Right ventricle myocardium inferior (tissue), 1 donor: ENCODE measurements at regions of chr5 and their contacts with region 1.

Region 1: DNA sequence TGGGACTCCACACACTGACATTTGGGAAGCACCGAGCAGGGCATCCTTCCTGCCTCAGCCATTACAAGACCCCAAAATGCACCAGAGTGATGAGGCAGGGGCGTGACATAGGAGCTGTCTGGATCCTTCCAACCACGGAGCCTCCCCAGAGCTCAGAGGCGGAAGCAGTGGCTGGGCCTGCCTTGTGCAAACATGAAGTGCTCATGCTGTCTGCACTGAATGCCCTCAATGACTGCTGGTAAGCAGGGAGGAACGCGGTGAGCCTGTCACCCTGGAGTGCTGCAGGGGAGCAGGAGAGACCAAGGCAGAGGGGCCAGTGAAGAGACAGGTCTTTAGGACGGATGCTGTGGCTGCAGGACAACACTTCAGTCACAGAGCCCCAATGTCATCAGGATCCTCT is 60.2 kb upstream of the HRH2 start:
- DNase-seq: no peak
- ATAC-seq: peak; percentile 43

Region 2: DNA sequence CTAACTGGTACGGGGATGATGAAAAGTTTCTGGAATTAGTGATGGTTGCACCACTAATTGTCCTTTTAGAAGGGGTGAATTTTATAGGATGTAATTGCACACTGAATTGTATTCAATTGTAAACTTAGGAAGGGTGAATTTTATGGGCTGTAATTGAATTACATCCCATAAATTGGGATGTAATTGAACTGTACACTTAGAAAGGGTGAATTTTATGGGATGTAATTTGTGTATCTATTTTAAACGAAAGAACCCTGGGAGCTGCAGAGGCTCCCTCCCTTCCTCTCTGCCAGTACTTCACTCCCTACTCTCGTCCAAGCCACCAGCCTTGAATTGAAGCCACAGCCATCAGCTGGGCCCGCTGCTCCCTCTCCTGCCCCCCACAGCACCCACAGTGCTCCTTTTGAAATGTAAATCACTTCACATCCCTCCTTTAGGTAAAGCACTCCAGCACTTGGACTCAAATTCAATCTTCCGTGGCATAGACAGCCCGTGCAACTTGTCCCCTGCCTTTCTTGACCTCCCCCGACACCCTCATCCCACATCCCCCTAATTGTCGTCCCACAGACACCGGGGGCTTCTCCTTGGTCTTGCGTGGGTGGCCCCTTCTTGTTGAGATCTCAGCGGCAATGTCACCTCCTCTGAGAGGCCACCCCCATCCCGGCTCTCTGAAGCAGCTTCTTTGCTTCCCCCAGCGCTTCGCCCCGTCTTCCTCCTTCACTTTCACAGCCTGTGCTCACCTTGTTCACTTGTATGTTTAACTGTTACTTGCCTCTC is 24.0 kb before region 1 on chr5:
- intact Hi-C with region 1: loop called (anchors 1 kb)
- DNase-seq: no peak
- ATAC-seq: peak; percentile 30

Region 3: GRCh38 chr5:175689147-175689991 is 91.7 kb after region 1 on chr5:
- intact Hi-C with region 1: loop called (anchors 5 kb)
- DNase-seq: peak; percentile 78
- ATAC-seq: peak; percentile 6

Region 4: GRCh38 chr5:175712681-175713085 is 115.0 kb after region 1 on chr5:
- intact Hi-C with region 1: loop called (anchors 5 kb)
- DNase-seq: no peak
- ATAC-seq: no peak